Caco-2 (cell line): ENCODE measurements at regions of chr11 and their contacts with region 1.

Region 1: GRCh38 chr11:65988791-65989592 is 13.0 kb downstream of the EIF1AD start:
- DNase-seq: peak; percentile 91 to 93
- H3K4me3 ChIP-seq: no peak overlapping the region
- H3K4me3 Mint-ChIP-seq: no peak overlapping the region
- H3K27ac Mint-ChIP-seq: no peak overlapping the region
- H3K4me1 ChIP-seq: no peaks in the 10 kb centered on the region
- H3K4me1 Mint-ChIP-seq: no peaks in the 10 kb centered on the region
- H3K27me3 ChIP-seq: no peaks in the 10 kb centered on the region
- H3K27me3 Mint-ChIP-seq: no peaks in the 10 kb centered on the region
- CTCF ChIP-seq: peak; percentile 94 to 97

Region 2: GRCh38 chr11:65440831-65441499 is 548.0 kb before region 1 on chr11:
- CTCF ChIA-PET with region 1: no interaction called
- POLR2A ChIA-PET with region 1: no interaction called
- intact Hi-C with region 1: no loop called
- DNase-seq: no peak
- H3K4me3 ChIP-seq: no peak overlapping the region
- H3K4me3 Mint-ChIP-seq: peak overlapping the region; percentile 20
- H3K27ac Mint-ChIP-seq: peak overlapping the region; percentile 91
- H3K4me1 ChIP-seq: peaks cover 37% of the 10 kb centered on the region
- H3K4me1 Mint-ChIP-seq: peaks cover 47% of the 10 kb centered on the region
- H3K27me3 ChIP-seq: no peaks in the 10 kb centered on the region
- H3K27me3 Mint-ChIP-seq: no peaks in the 10 kb centered on the region
- CTCF ChIP-seq: no peak

Region 3: GRCh38 chr11:65826962-65827735 is 161.8 kb before region 1 on chr11:
- CTCF ChIA-PET with region 1: no interaction called
- POLR2A ChIA-PET with region 1: no interaction called
- intact Hi-C with region 1: loop called (anchors 5 kb)
- DNase-seq: peak in 1 of 2 experiments; percentile 28
- H3K4me3 ChIP-seq: no peak overlapping the region
- H3K4me3 Mint-ChIP-seq: no peak overlapping the region
- H3K27ac Mint-ChIP-seq: no peak overlapping the region
- H3K4me1 ChIP-seq: peaks cover 13% of the 10 kb centered on the region
- H3K4me1 Mint-ChIP-seq: peaks cover 9% of the 10 kb centered on the region
- H3K27me3 ChIP-seq: no peaks in the 10 kb centered on the region
- H3K27me3 Mint-ChIP-seq: peaks cover 3% of the 10 kb centered on the region
- CTCF ChIP-seq: no peak

Region 4: GRCh38 chr11:65911682-65912568 is 77.1 kb before region 1 on chr11:
- CTCF ChIA-PET with region 1: interaction called, 4 read pairs
- POLR2A ChIA-PET with region 1: no interaction called
- intact Hi-C with region 1: loop called (anchors 5 kb)
- DNase-seq: peak; percentile 65 to 73
- H3K4me3 ChIP-seq: no peak overlapping the region
- H3K4me3 Mint-ChIP-seq: peak overlapping the region; percentile 28
- H3K27ac Mint-ChIP-seq: no peak overlapping the region
- H3K4me1 ChIP-seq: peaks cover 8% of the 10 kb centered on the region
- H3K4me1 Mint-ChIP-seq: peaks cover 6% of the 10 kb centered on the region
- H3K27me3 ChIP-seq: no peaks in the 10 kb centered on the region
- H3K27me3 Mint-ChIP-seq: no peaks in the 10 kb centered on the region
- CTCF ChIP-seq: peak; percentile 46 to 77

Region 5: GRCh38 chr11:66022401-66023185 is 33.6 kb after region 1 on chr11:
- CTCF ChIA-PET with region 1: interaction called, 3 read pairs
- POLR2A ChIA-PET with region 1: no interaction called
- intact Hi-C with region 1: loop called (anchors 1 kb)
- DNase-seq: peak; percentile 73 to 89
- H3K4me3 ChIP-seq: no peak overlapping the region; the same call in 1 of the 2 replicates
- H3K4me3 Mint-ChIP-seq: peak overlapping the region; percentile 63
- H3K27ac Mint-ChIP-seq: peak overlapping the region; percentile 40
- H3K4me1 ChIP-seq: no peaks in the 10 kb centered on the region
- H3K4me1 Mint-ChIP-seq: no peaks in the 10 kb centered on the region
- H3K27me3 ChIP-seq: no peaks in the 10 kb centered on the region
- H3K27me3 Mint-ChIP-seq: peaks cover 3% of the 10 kb centered on the region
- CTCF ChIP-seq: peak; percentile 96